HepG2 (cell line): ENCODE measurements at regions of chr2 and their contacts with region 1.

Region 1: GRCh38 chr2:47225061-47225859 is 70.2 kb upstream of the STPG4 start:
- DNase-seq: peak; percentile 97
- ATAC-seq: peak; percentile 97
- H3K4me3 ChIP-seq: peak overlapping the region in 1 of 3 experiments; percentile 50; a peak in 2 of 6 replicates
- H3K27ac ChIP-seq: no peak overlapping the region
- H3K4me1 ChIP-seq: peaks cover 48% of the 10 kb centered on the region
- H3K27me3 ChIP-seq: peaks cover 1 to 27% of the 10 kb centered on the region in 2 experiments; a peak in 3 of 5 replicates
- CTCF ChIP-seq: no peak
- EP300 ChIP-seq: peak; percentile 75 to 89; a peak in 3 of 4 replicates
- POLR2A ChIP-seq: no peak
- RAD21 ChIP-seq: 0 out of 2 replicates have a peak, but pooled peaks have one; percentile 16

Region 2: DNA sequence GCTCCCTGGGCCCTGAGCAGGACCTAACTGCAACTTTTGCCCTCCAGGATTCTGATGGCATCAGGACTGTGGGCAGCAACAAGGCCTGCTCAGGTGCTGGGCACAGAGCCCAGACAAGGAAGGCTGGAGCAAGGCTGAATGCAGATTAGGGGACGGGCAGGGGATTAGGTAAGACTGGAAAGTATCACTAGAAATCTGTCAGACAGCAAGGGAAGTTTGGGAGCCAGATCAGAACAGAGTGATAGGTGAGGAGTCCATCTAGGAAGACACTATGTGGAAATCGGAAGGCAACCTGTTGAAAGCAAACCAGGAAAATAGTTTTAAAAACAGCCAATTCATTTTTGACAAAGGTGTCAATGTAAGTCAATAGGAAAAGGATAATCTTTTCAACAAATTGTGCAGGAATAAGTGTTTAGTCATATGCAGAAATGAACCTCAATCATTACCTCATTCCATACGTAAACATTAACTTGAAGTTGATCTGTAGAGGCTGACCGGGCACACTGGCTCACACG is 13.7 kb before region 1 on chr2:
- CTCF ChIA-PET with region 1: no interaction called
- POLR2A ChIA-PET with region 1: interaction called, 8 read pairs
- in situ Hi-C with region 1: no loop called
- intact Hi-C with region 1: loop called (anchors 1 kb)
- DNase-seq: no peak
- ATAC-seq: peak; percentile 47
- H3K4me3 ChIP-seq: no peak overlapping the region
- H3K27ac ChIP-seq: no peak overlapping the region
- H3K4me1 ChIP-seq: peaks cover 32% of the 10 kb centered on the region
- H3K27me3 ChIP-seq: peaks cover 5 to 26% of the 10 kb centered on the region in 2 experiments; a peak in 4 of 5 replicates
- CTCF ChIP-seq: no peak
- EP300 ChIP-seq: no peak
- POLR2A ChIP-seq: no peak
- RAD21 ChIP-seq: no peak

Region 3: GRCh38 chr2:47272031-47272864 is 47.0 kb after region 1 on chr2:
- CTCF ChIA-PET with region 1: no interaction called
- POLR2A ChIA-PET with region 1: no interaction called
- in situ Hi-C with region 1: no loop called
- intact Hi-C with region 1: loop called (anchors 5 kb)
- DNase-seq: no peak
- ATAC-seq: peak; percentile 89
- H3K4me3 ChIP-seq: peak overlapping the region; percentile 54 to 75 (median 68); a peak in 5 of 6 replicates
- H3K27ac ChIP-seq: no peak overlapping the region
- H3K4me1 ChIP-seq: peaks cover 66% of the 10 kb centered on the region
- H3K27me3 ChIP-seq: peaks cover 0 to 2% of the 10 kb centered on the region in 2 experiments; a peak in 1 of 5 replicates
- CTCF ChIP-seq: peak; percentile 98
- EP300 ChIP-seq: no peak
- POLR2A ChIP-seq: no peak
- RAD21 ChIP-seq: peak; percentile 97